Calu3 (cell line): ENCODE measurements at regions of chr1 and their contacts with region 1.

Region 1: GRCh38 chr1:60833173-60833572 is 249.2 kb upstream of the NFIA start:
- DNase-seq: peak; percentile 49
- H3K4me3 Mint-ChIP-seq: no peak overlapping the region
- H3K27ac Mint-ChIP-seq: peak overlapping the region; percentile 58
- H3K4me1 Mint-ChIP-seq: peaks cover 23% of the 10 kb centered on the region
- H3K27me3 Mint-ChIP-seq: no peaks in the 10 kb centered on the region
- CTCF ChIP-seq: no peak

Region 2: DNA sequence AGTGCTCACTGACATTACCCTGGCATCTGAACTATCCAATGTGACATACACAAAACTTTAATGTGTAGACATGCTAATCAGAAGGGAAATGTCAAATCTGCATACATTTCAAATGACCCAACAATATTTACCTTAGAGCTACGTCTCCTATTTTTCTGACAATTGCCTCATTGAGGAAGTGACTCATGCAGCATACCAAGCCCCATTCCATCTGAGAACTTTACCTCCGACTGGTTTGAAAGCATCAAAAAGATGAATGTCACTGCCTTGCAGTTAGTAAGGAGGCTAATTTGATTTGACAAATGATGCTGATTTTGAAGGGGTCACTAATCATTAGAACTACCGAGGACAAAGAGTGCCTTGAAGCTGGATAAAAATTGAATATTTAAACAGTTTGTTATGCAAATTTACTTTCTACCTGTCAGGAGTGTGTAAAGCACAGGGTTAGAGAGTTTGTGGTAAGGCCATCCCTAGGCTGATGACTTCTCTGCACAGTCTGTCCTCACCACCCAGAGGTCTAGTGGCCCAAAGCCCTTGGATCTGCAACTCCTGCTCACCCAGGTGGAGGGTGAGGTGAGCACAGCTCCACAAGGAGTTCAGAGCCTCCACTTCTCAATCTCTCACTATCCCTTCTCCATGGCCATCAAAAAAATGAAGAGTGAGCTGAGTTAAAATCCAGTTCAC is 259.3 kb before region 1 on chr1:
- CTCF ChIA-PET with region 1: no interaction called
- intact Hi-C with region 1: loop called (anchors 2 kb)
- DNase-seq: peak; percentile 29
- H3K4me3 Mint-ChIP-seq: peak overlapping the region; percentile 51
- H3K27ac Mint-ChIP-seq: peak overlapping the region; percentile 96
- H3K4me1 Mint-ChIP-seq: peaks cover 61% of the 10 kb centered on the region
- H3K27me3 Mint-ChIP-seq: no peaks in the 10 kb centered on the region
- CTCF ChIP-seq: no peak

Region 3: GRCh38 chr1:60739729-60740128 is 93.4 kb before region 1 on chr1:
- CTCF ChIA-PET with region 1: interaction called, 3 read pairs
- intact Hi-C with region 1: loop called (anchors 5 kb)
- DNase-seq: no peak
- H3K4me3 Mint-ChIP-seq: no peak overlapping the region
- H3K27ac Mint-ChIP-seq: no peak overlapping the region
- H3K4me1 Mint-ChIP-seq: no peaks in the 10 kb centered on the region
- H3K27me3 Mint-ChIP-seq: no peaks in the 10 kb centered on the region
- CTCF ChIP-seq: no peak

Region 4: DNA sequence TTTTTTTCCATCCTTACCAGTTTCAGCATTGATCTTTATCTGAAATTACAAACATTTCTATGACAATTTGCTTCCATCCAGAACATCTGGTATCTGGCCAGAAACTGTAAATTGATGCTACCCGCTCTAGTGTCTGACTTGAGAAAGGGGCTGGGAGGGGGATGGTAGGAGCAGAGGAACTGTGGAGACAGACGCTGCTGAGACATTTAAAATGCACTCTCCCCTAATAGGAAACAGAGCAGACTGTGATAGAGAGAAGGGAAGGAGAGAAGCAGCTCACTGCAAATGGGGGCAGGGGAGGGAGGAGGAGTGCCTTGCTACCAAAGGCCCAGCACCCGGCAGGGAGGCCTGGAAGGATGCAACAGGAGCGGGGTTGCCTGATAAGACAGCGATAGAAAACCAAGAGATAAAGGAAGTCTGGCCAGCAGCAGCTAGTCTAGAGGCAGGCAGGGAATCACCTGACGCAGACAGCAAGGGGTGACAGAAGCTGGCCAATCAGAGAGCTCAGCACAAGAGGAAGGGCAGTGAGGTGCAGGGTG is 53.7 kb after region 1 on chr1:
- CTCF ChIA-PET with region 1: no interaction called
- intact Hi-C with region 1: no loop called
- DNase-seq: no peak
- H3K4me3 Mint-ChIP-seq: no peak overlapping the region
- H3K27ac Mint-ChIP-seq: no peak overlapping the region
- H3K4me1 Mint-ChIP-seq: no peaks in the 10 kb centered on the region
- H3K27me3 Mint-ChIP-seq: peaks cover 45% of the 10 kb centered on the region
- CTCF ChIP-seq: no peak

Region 5: DNA sequence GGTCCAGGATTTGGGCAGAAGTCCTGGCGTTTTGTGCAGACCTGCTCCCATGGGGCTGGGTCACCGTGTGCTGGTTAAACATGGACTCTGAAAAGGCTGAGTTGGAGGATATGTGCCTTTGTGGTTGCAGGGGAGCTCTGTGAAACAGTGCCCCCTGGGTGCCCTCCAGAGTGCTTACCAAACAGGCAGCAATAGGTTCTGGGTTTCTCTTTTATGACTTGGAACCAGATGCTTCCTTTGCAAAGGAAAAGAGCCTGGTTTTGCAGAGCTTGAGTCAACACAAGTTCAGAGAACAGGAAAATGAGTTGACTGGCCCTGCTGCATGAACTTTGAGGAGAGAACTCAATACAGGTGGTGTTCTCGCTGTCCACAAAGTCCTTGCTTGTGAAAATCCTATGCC is 602.8 kb after region 1 on chr1:
- CTCF ChIA-PET with region 1: no interaction called
- intact Hi-C with region 1: no loop called
- DNase-seq: no peak
- H3K4me3 Mint-ChIP-seq: no peak overlapping the region
- H3K27ac Mint-ChIP-seq: no peak overlapping the region
- H3K4me1 Mint-ChIP-seq: peaks cover 60% of the 10 kb centered on the region
- H3K27me3 Mint-ChIP-seq: no peaks in the 10 kb centered on the region
- CTCF ChIP-seq: no peak